ENCODE measurements at regions of chrX and their contacts with region 1.

Region 1: DNA sequence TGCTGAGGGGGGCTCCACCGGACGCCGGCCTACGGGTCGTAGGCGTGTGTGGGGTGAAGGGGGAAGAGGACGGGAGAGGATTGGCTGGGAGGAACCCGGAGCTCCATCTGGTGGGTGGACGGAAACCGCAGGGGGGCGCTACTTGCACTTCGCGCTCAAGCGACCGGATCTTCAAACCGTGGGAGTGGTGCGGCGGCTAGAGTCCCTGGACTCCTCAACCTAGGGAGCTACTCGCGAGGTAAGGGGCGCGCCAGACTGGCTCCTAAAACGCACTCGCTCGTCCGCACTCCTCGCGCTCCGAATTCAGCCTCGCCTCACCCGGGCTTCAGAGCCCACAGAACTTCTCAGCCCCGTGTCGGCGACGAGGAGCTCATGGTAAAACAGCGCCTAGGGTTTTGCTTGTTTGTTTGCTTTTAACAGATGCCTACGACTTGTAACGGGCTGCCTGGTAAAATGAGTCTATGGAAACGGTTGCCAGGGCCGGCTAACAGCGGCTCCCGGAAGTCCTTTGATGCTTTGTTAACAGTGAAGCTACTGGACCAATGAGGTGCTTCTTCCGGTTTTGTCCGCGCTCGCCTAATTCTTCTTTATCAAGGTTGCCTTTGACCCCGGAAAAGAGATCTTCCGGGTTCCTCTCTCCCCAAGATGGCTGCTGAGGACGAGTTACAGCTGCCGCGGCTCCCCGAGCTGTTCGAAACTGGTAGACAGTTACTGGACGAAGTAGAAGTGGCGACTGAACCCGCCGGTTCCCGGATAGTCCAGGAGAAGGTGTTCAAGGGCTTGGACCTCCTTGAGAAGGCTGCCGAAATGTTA is at the start of gene IGBP1:
- DNase-seq: peak; percentile 54 to 94 (median 67)
- ATAC-seq: peak; percentile 81
- H3K4me3 ChIP-seq: peak within 1 kb of the TSS; percentile 77
- H3K4me3 Mint-ChIP-seq: peak within 1 kb of the TSS; percentile 89
- H3K27ac ChIP-seq: peak within 1 kb of the TSS; percentile 79 to 94
- H3K27ac Mint-ChIP-seq: peak within 1 kb of the TSS; percentile 87
- H3K4me1 ChIP-seq: peaks cover 23% of the 10 kb centered on the region
- H3K4me1 Mint-ChIP-seq: peaks cover 37% of the 10 kb centered on the region
- H3K27me3 ChIP-seq: no peaks in the 10 kb centered on the region
- H3K27me3 Mint-ChIP-seq: no peaks in the 10 kb centered on the region
- CTCF ChIP-seq: peak; percentile 51
- total RNA-seq, gene IGBP1: 63.7 to 64.4 TPM

Region 2: DNA sequence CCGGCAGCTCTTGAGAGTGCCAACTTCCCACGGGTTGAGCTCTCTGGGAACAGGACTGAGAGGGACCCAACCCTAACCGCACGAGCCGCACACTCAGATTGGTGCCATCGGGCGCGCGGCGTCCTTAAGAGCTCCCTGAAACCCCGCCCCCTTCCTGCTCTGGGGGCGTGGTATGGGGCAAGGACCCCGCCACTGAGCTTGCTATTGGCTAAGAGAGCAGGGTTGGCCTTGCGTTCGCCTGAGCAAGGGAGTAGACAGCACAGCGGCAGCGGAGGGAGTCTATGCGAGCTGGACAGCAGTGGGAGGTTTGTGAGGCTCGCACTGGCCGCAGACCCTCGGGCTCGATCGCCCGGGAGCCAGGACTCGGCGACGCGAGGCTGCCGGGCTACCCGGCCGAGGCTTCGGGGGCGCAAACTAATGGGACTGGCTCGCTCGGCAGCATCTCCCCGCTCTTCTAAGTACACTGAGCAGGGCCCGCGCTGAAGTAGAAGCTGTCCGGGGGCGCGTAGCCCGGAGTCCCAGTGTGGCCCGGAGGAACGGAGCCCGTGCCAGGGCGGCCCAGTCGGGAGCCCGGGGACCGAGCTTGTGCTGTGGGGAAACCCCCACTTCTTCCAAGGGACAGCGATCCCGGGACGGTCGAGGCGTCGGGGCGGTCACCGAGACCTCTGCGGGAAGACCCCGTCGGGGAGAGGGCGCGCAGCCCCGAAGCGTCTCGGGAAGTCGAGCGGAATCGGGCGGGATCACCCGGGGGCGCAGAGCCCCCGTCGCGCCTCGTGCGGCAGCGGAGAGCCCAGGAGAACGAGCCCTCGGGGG is 1304.6 kb before region 1 on chrX and contains the start of gene EFNB1:
- CTCF ChIA-PET with region 1: interaction called, 3 read pairs
- POLR2A ChIA-PET with region 1: interaction called, 11 read pairs
- intact Hi-C with region 1: loop called in 1 of 2 experiments (anchors 10 kb)
- DNase-seq: peak; percentile 70 to 94 (median 82)
- ATAC-seq: peak; percentile 94
- H3K4me3 ChIP-seq: peak within 1 kb of the TSS; percentile 80
- H3K4me3 Mint-ChIP-seq: peak within 1 kb of the TSS; percentile 94
- H3K27ac ChIP-seq: no peak within 1 kb of the TSS
- H3K27ac Mint-ChIP-seq: peak within 1 kb of the TSS; percentile 63
- H3K4me1 ChIP-seq: peaks cover 35% of the 10 kb centered on the region
- H3K4me1 Mint-ChIP-seq: peaks cover 23% of the 10 kb centered on the region
- H3K27me3 ChIP-seq: peaks cover 0 to 2% of the 10 kb centered on the region in 2 experiments
- H3K27me3 Mint-ChIP-seq: no peaks in the 10 kb centered on the region
- CTCF ChIP-seq: no peak
- total RNA-seq, gene EFNB1: 2.9 to 3.1 TPM

Region 3: DNA sequence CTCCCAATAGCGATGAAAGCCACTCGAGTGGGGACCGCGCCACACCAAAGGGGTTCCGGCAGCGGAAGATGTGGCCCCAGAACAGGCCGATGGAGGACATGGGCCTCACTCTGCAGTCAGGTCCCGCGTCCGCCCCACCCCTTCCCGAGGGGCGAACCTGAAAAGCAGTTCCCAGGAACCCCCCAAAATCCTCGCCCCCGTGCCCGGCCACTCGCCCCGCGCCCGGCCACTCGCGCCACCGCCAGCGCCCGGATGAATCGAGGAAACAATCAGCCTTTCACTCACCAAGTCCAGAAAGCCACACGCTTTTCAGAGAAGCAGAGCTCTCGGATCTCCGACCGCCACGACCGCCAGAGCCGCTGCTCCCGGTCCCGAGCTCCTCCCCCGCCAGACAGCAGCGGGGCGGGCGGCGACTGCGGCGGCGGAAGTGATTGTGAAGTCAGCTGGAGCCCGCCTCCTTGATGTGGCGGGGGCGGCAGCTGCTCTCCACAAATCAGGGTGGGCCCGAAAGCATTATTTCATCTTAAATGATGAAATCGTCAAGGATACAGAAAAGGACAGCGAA is 968.3 kb before region 1 on chrX and contains the start of gene PJA1:
- CTCF ChIA-PET with region 1: no interaction called
- POLR2A ChIA-PET with region 1: interaction called, 6 read pairs
- intact Hi-C with region 1: loop called (anchors 2 to 10 kb)
- DNase-seq: peak; percentile 42 to 84 (median 64)
- ATAC-seq: peak; percentile 76
- H3K4me3 ChIP-seq: peak within 1 kb of the TSS; percentile 81
- H3K4me3 Mint-ChIP-seq: peak within 1 kb of the TSS; percentile 94
- H3K27ac ChIP-seq: peak within 1 kb of the TSS; percentile 58 to 79
- H3K27ac Mint-ChIP-seq: peak within 1 kb of the TSS; percentile 90
- H3K4me1 ChIP-seq: peaks cover 18% of the 10 kb centered on the region
- H3K4me1 Mint-ChIP-seq: peaks cover 31% of the 10 kb centered on the region
- H3K27me3 ChIP-seq: no peaks in the 10 kb centered on the region
- H3K27me3 Mint-ChIP-seq: no peaks in the 10 kb centered on the region
- CTCF ChIP-seq: no peak
- total RNA-seq, gene PJA1: 36.5 to 37.6 TPM

Region 4: GRCh38 chrX:70030301-70030767 is 103.2 kb before region 1 on chrX:
- CTCF ChIA-PET with region 1: interaction called, 5 read pairs
- POLR2A ChIA-PET with region 1: no interaction called
- intact Hi-C with region 1: loop called in 1 of 2 experiments (anchors 5 kb)
- DNase-seq: peak in 11 of 14 experiments; percentile 5 to 62 (median 27)
- ATAC-seq: no peak
- H3K4me3 ChIP-seq: no peak overlapping the region
- H3K4me3 Mint-ChIP-seq: no peak overlapping the region
- H3K27ac ChIP-seq: no peak overlapping the region
- H3K27ac Mint-ChIP-seq: no peak overlapping the region
- H3K4me1 ChIP-seq: peaks cover 17% of the 10 kb centered on the region
- H3K4me1 Mint-ChIP-seq: peaks cover 19% of the 10 kb centered on the region
- H3K27me3 ChIP-seq: no peaks in the 10 kb centered on the region
- H3K27me3 Mint-ChIP-seq: no peaks in the 10 kb centered on the region
- CTCF ChIP-seq: peak; percentile 35

Region 5: GRCh38 chrX:70289793-70290776 is 156.6 kb after region 1 on chrX and contains the starts of genes KIF4A and PDZD11:
- CTCF ChIA-PET with region 1: no interaction called
- POLR2A ChIA-PET with region 1: interaction called, 9 read pairs
- intact Hi-C with region 1: loop called in 1 of 2 experiments (anchors 10 kb)
- DNase-seq: peak; percentile 45 to 87 (median 65)
- ATAC-seq: peak; percentile 96
- H3K4me3 ChIP-seq: peak within 1 kb of the TSS; percentile 76
- H3K4me3 Mint-ChIP-seq: peak within 1 kb of the TSS; percentile 86
- H3K27ac ChIP-seq: peak within 1 kb of the TSS in 1 of 2 donors; percentile 62
- H3K27ac Mint-ChIP-seq: peak within 1 kb of the TSS; percentile 81
- H3K4me1 ChIP-seq: peaks cover 13% of the 10 kb centered on the region
- H3K4me1 Mint-ChIP-seq: peaks cover 18% of the 10 kb centered on the region
- H3K27me3 ChIP-seq: no peaks in the 10 kb centered on the region
- H3K27me3 Mint-ChIP-seq: no peaks in the 10 kb centered on the region
- CTCF ChIP-seq: no peak
- total RNA-seq, gene KIF4A: 0.06 to 0.19 TPM
- total RNA-seq, gene PDZD11: 6.1 to 7.8 TPM

Region 6: GRCh38 chrX:70398899-70399298 is 265.4 kb after region 1 on chrX:
- CTCF ChIA-PET with region 1: no interaction called
- POLR2A ChIA-PET with region 1: interaction called, 10 read pairs
- intact Hi-C with region 1: no loop called
- DNase-seq: peak in 5 of 14 experiments; percentile 17 to 75 (median 61)
- ATAC-seq: peak; percentile 93
- H3K4me3 ChIP-seq: peak overlapping the region; percentile 12
- H3K4me3 Mint-ChIP-seq: peak overlapping the region; percentile 50
- H3K27ac ChIP-seq: peak overlapping the region; percentile 45 to 66
- H3K27ac Mint-ChIP-seq: peak overlapping the region; percentile 93
- H3K4me1 ChIP-seq: peaks cover 5% of the 10 kb centered on the region
- H3K4me1 Mint-ChIP-seq: peaks cover 16% of the 10 kb centered on the region
- H3K27me3 ChIP-seq: no peaks in the 10 kb centered on the region
- H3K27me3 Mint-ChIP-seq: no peaks in the 10 kb centered on the region
- CTCF ChIP-seq: no peak

Measured in CD4-positive, alpha-beta T cell (primary cell).